ENCODE measurements at regions of chr6 and their contacts with region 1.

Region 1: DNA sequence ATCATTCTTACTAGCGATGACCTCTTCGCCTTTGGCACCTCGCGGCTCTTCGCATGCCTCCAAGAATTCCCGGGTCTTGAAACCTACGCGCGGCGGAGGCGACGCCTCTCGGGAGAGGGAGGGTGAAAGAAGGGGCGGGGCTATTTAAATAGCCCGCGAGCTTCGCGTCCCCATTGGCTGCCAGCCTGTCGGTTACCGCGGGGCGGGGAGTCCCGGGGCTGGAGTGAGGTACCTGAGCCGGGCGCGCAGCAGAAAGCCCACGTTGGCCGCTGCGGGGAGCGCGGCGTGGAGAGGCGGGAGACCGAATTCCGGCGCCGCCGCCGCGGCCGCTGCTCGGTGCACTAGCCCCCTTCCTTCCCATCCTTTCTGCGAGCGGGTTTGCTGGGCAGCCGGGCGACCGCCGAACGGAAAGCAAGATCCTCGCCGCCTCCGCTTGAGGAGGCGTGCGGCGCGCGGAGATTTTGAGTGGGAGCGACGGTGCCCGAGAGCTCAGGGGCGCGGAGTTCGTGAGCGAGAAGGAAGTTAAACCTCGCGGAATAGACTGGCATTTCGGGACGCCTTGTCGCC is at the start of gene BMP6:
- DNase-seq: peak; percentile 71
- H3K4me3 Mint-ChIP-seq: peak within 1 kb of the TSS; percentile 80
- H3K27ac Mint-ChIP-seq: no peak within 1 kb of the TSS
- H3K4me1 Mint-ChIP-seq: peaks cover 17% of the 10 kb centered on the region
- H3K27me3 Mint-ChIP-seq: peaks cover 68% of the 10 kb centered on the region
- total RNA-seq, gene BMP6: 0.86 and 1.1 TPM in 2 replicates

Region 2: DNA sequence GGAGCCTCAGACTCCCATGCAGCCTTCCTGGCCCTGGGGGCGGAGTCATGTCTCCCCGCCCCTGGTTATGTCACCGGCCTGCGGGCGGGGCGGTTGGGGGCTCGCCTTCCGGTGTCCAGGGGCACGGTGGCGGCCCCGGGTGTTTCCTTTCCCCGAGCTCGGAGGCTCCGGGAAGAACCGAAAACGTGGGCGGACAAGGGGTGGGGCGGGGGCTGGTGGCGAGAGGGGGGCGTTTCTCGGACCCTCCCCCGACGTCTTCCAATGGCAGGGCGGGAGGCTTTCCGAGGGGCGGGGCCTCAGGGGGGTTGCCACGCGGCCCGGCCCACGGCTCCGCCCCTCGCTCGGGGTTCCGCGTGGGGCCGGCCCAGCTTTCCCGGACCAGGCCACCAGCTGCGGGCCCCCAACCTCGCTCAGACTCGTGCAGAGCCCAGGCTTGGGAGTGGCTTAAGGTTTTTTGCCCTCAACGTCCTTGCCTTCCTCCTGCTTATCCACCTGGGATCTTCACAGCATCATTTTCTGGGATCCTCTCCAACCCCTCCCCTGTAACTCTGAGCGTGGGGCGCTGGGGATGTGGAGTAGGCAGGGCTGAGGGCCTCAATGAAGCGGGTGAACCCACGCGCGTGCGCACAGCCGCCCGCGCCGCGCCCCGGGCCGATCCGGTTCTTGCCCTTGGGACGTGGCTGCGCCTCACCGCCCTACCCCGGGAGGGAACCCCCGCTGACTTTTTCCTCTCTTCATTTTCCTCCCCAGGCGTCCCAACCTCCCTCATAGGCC is 1717.1 kb before region 1 on chr6:
- intact Hi-C with region 1: loop called (anchors 5 kb)
- DNase-seq: peak; percentile 54
- H3K4me3 Mint-ChIP-seq: peak overlapping the region; percentile 81
- H3K27ac Mint-ChIP-seq: peak overlapping the region; percentile 40
- H3K4me1 Mint-ChIP-seq: peaks cover 38% of the 10 kb centered on the region
- H3K27me3 Mint-ChIP-seq: peaks cover 70% of the 10 kb centered on the region

Region 3: GRCh38 chr6:7312616-7313504 is 413.1 kb before region 1 on chr6 and contains the start of gene SSR1:
- intact Hi-C with region 1: loop called (anchors 5 kb)
- DNase-seq: peak; percentile 95
- H3K4me3 Mint-ChIP-seq: peak within 1 kb of the TSS; percentile 98
- H3K27ac Mint-ChIP-seq: peak within 1 kb of the TSS; percentile 94
- H3K4me1 Mint-ChIP-seq: peaks cover 35% of the 10 kb centered on the region
- H3K27me3 Mint-ChIP-seq: no peaks in the 10 kb centered on the region
- total RNA-seq, gene SSR1: 160 and 168 TPM in 2 replicates

Region 4: GRCh38 chr6:7684843-7685242 is 41.1 kb before region 1 on chr6:
- intact Hi-C with region 1: no loop called
- DNase-seq: no peak
- H3K4me3 Mint-ChIP-seq: no peak overlapping the region
- H3K27ac Mint-ChIP-seq: no peak overlapping the region
- H3K4me1 Mint-ChIP-seq: no peaks in the 10 kb centered on the region
- H3K27me3 Mint-ChIP-seq: peaks cover 9% of the 10 kb centered on the region

Region 5: GRCh38 chr6:7697820-7698623 is 27.9 kb before region 1 on chr6:
- intact Hi-C with region 1: loop called (anchors 2 kb)
- DNase-seq: no peak
- H3K4me3 Mint-ChIP-seq: peak overlapping the region; percentile 42
- H3K27ac Mint-ChIP-seq: peak overlapping the region; percentile 92
- H3K4me1 Mint-ChIP-seq: peaks cover 16% of the 10 kb centered on the region
- H3K27me3 Mint-ChIP-seq: peaks cover 4% of the 10 kb centered on the region

Region 6: GRCh38 chr6:7992002-7992815 is 266.3 kb after region 1 on chr6:
- intact Hi-C with region 1: loop called (anchors 5 kb)
- DNase-seq: no peak
- H3K4me3 Mint-ChIP-seq: no peak overlapping the region
- H3K27ac Mint-ChIP-seq: no peak overlapping the region
- H3K4me1 Mint-ChIP-seq: no peaks in the 10 kb centered on the region
- H3K27me3 Mint-ChIP-seq: no peaks in the 10 kb centered on the region

Region 7: GRCh38 chr6:8102122-8102958 is 376.4 kb after region 1 on chr6 and contains the start of gene EEF1E1:
- intact Hi-C with region 1: loop called (anchors 1 kb)
- DNase-seq: peak; percentile 87
- H3K4me3 Mint-ChIP-seq: peak within 1 kb of the TSS; percentile 92
- H3K27ac Mint-ChIP-seq: peak within 1 kb of the TSS; percentile 97
- H3K4me1 Mint-ChIP-seq: peaks cover 34% of the 10 kb centered on the region
- H3K27me3 Mint-ChIP-seq: peaks cover 4% of the 10 kb centered on the region
- total RNA-seq, gene EEF1E1: 92.8 and 99.8 TPM in 2 replicates

Region 8: DNA sequence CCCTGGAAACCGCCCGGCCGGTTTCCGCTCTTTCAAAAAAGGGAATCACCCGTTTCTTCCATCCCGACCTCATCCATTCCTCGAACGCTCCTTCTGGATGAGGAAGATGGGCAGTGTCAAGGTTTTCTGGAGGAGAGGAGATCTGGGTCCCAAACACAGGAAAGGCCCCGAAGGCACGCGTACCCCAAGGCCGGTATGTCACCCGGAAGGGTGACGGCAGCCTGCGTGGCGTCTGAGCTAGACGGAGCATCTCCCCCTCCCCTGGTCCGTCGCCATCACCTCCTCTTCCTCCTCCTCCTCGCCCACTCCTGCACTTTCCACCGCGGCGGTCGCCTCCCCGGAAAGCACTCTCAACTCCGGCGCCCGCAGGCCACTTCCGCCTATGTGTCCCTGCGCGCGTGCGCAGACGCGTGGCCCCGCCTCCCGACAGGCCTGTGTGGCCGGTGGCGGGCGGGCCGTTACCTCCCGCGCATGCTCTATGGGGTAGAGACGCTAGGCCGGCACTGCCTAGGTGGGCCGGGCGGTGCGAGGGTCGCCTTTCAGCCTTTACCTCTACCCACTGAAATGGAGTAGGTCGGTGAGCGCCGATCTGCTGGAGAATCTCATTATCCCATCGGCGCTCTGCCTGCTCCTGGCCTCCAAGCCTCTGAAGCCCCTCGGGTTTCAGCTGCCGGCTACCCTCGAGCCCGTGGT is 709.4 kb after region 1 on chr6 and contains the start of gene SLC35B3:
- intact Hi-C with region 1: loop called (anchors 5 kb)
- DNase-seq: peak; percentile 98
- H3K4me3 Mint-ChIP-seq: peak within 1 kb of the TSS; percentile 94
- H3K27ac Mint-ChIP-seq: peak within 1 kb of the TSS; percentile 98
- H3K4me1 Mint-ChIP-seq: peaks cover 39% of the 10 kb centered on the region
- H3K27me3 Mint-ChIP-seq: peaks cover 3% of the 10 kb centered on the region
- total RNA-seq, gene SLC35B3: 6.4 and 6.5 TPM in 2 replicates

Measured in activated T-helper 1 cell treated with anti-CD3 and anti-CD28 coated beads, Interleukin-12 subunit alpha, Interleukin-12 subunit beta, Interleukin-2, Interleukin-4 antibody, amounts not matched to agents 30 ng/mL and 10 ng/mL and 1 ng/mL, durations not matched to agents 14 hours and 24 hours and 36 hours (primary cell).